ENCODE measurements at regions of chr5 and their contacts with region 1.

Region 1: GRCh38 chr5:157245477-157245876 is 20.4 kb upstream of the CYFIP2 start:
- DNase-seq: no peak
- ATAC-seq: no peak
- H3K4me3 ChIP-seq: no peak overlapping the region
- H3K4me3 Mint-ChIP-seq: peak overlapping the region in 3 of 10 donors; percentile 23 to 75 (median 27)
- H3K27ac ChIP-seq: peak overlapping the region; percentile 36
- H3K27ac Mint-ChIP-seq: peak overlapping the region; percentile 63 to 98 (median 86)
- H3K4me1 ChIP-seq: peaks cover 45 to 67% of the 10 kb centered on the region in 2 donors
- H3K4me1 Mint-ChIP-seq: peaks cover 41 to 87% (median 81%) of the 10 kb centered on the region in 7 donors
- H3K27me3 ChIP-seq: no peaks in the 10 kb centered on the region
- H3K27me3 Mint-ChIP-seq: no peaks in the 10 kb centered on the region

Region 2: DNA sequence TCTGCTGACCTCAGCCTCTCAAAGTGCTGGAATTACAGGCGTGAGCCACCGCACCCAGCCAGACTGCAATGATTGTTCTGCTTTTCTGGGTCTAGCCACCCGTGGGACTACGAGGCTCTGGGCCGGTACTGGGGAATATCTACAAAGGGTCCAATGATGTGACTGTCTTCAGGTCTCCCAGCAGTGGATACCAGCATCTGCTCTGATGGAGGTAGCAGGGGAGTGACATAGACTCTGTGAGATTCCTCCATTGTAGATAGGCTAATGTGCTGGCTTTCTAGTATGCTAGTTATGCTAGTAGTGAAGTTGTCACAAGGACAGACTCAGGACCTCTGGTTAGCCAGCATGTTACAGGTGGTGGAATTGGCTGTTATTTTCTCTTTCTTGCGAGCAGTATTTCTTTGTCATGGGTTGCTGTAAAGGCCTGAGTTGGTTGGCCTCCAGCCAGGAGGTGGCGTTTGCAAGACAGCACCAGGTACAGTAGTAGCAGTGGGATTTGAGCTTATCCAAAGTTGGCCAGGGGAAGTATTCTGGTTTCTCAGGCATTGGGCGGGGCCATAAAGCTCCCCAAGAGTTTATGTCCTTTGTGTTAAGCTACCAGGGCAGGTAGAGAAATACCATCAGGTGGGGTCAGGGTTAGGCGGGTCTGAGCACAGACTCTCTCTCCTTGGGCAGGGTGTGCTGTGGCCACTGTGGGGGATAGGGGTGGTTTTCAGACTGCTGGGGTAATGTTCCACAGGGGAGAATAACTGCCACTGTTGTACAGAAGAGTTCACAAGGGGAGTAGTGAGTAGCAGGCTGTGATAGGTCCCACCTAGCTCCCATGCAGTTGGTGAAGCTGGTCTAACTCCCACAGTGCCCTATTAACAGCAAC is 813.3 kb before region 1 on chr5:
- CTCF ChIA-PET with region 1: no interaction called
- POLR2A ChIA-PET with region 1: no interaction called
- intact Hi-C with region 1: no loop called
- DNase-seq: no peak
- ATAC-seq: no peak
- H3K4me3 ChIP-seq: no peak overlapping the region
- H3K4me3 Mint-ChIP-seq: no peak overlapping the region
- H3K27ac ChIP-seq: no peak overlapping the region
- H3K27ac Mint-ChIP-seq: no peak overlapping the region
- H3K4me1 ChIP-seq: no peaks in the 10 kb centered on the region
- H3K4me1 Mint-ChIP-seq: peaks cover 0 to 3% (median 0%) of the 10 kb centered on the region in 7 donors
- H3K27me3 ChIP-seq: no peaks in the 10 kb centered on the region
- H3K27me3 Mint-ChIP-seq: peaks cover 17 to 39% (median 32%) of the 10 kb centered on the region in 5 donors

Region 3: DNA sequence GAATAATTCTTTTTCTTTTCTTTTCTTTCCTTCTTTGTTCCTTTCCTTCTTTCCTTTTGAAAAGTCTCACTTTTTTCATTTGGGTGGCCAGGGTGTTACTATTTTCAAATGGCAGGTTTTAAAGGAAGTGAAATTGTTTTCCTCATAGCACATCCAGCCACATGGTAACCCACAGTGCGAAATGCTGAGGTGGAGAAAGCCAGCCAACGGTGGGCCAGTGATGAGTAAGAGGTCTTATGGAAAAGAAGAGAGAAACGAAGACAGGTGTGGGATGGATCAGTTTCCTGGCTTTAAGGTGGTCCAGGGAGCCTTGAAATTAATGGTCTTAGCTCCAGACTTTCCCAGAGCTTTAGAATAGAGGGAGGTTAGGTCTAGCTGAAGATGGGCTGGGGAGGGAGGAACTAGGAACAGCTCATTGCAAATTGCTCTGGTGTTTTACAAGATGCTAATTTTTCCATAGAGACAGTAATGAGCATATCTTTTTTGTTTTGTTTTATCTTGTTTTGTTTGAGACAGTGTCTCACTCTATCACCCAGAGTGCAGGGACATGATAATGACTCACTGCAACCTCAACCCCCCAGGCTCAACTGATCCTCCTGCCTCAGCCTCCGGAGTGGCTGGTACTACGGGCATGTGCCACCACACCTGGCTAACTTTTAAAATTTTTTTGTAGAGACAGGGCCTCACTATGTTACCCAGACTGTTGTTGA is 47.0 kb before region 1 on chr5:
- CTCF ChIA-PET with region 1: interaction called, 6 read pairs
- POLR2A ChIA-PET with region 1: interaction called, 7 read pairs
- intact Hi-C with region 1: loop called in 1 of 2 experiments (anchors 2 kb)
- DNase-seq: peak in 2 of 9 donors; percentile 58 to 77
- ATAC-seq: peak; percentile 49
- H3K4me3 ChIP-seq: peak overlapping the region; percentile 24
- H3K4me3 Mint-ChIP-seq: peak overlapping the region; percentile 47 to 98 (median 78)
- H3K27ac ChIP-seq: peak overlapping the region; percentile 81
- H3K27ac Mint-ChIP-seq: peak overlapping the region; percentile 78 to 98 (median 87)
- H3K4me1 ChIP-seq: peaks cover 86 to 95% of the 10 kb centered on the region in 2 donors
- H3K4me1 Mint-ChIP-seq: peaks cover 53 to 100% (median 97%) of the 10 kb centered on the region in 7 donors
- H3K27me3 ChIP-seq: no peaks in the 10 kb centered on the region
- H3K27me3 Mint-ChIP-seq: no peaks in the 10 kb centered on the region

Region 4: GRCh38 chr5:157225469-157226422 is 19.7 kb before region 1 on chr5:
- CTCF ChIA-PET with region 1: interaction called, 3 read pairs
- POLR2A ChIA-PET with region 1: interaction called, 3 read pairs
- intact Hi-C with region 1: loop called in 1 of 2 experiments (anchors 2 kb)
- DNase-seq: no peak
- ATAC-seq: no peak
- H3K4me3 ChIP-seq: no peak overlapping the region
- H3K4me3 Mint-ChIP-seq: peak overlapping the region in 6 of 10 donors; percentile 12 to 81 (median 50)
- H3K27ac ChIP-seq: peak overlapping the region; percentile 37
- H3K27ac Mint-ChIP-seq: peak overlapping the region; percentile 71 to 96 (median 82)
- H3K4me1 ChIP-seq: peaks cover 44 to 60% of the 10 kb centered on the region in 2 donors
- H3K4me1 Mint-ChIP-seq: peaks cover 34 to 75% (median 59%) of the 10 kb centered on the region in 7 donors
- H3K27me3 ChIP-seq: no peaks in the 10 kb centered on the region
- H3K27me3 Mint-ChIP-seq: no peaks in the 10 kb centered on the region

Region 5: GRCh38 chr5:157233515-157233914 is 12.0 kb before region 1 on chr5:
- CTCF ChIA-PET with region 1: interaction called, 3 read pairs
- POLR2A ChIA-PET with region 1: interaction called, 13 read pairs
- intact Hi-C with region 1: loop called (anchors 1 to 2 kb)
- DNase-seq: peak in 7 of 9 donors; percentile 54 to 81 (median 76)
- ATAC-seq: peak; percentile 95
- H3K4me3 ChIP-seq: no peak overlapping the region
- H3K4me3 Mint-ChIP-seq: peak overlapping the region in 5 of 10 donors; percentile 43 to 56 (median 52)
- H3K27ac ChIP-seq: peak overlapping the region; percentile 55
- H3K27ac Mint-ChIP-seq: peak overlapping the region; percentile 24 to 96 (median 85)
- H3K4me1 ChIP-seq: peaks cover 19 to 26% of the 10 kb centered on the region in 2 donors
- H3K4me1 Mint-ChIP-seq: peaks cover 23 to 82% (median 64%) of the 10 kb centered on the region in 7 donors
- H3K27me3 ChIP-seq: no peaks in the 10 kb centered on the region
- H3K27me3 Mint-ChIP-seq: no peaks in the 10 kb centered on the region

Region 6: DNA sequence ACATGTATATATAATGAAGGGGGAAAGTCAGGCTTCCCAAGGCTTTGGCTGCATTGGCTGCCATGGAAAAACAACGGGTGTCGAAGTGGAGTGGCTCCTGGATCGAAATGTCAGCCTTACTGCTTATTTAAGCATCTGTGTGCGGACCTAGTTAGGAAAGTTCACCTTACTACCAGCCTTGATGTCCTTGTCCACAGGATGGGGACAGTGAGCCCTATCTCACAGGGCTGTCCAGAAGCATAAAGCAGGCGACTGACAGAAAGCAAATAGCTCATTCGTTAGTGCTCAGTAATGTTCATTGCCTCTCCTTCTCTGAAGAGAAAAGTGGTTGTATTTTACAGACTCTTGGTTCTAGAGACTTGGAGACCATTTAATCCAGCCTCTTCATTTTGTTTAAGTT is 133.0 kb after region 1 on chr5:
- CTCF ChIA-PET with region 1: no interaction called
- POLR2A ChIA-PET with region 1: no interaction called
- intact Hi-C with region 1: no loop called
- DNase-seq: no peak
- ATAC-seq: no peak
- H3K4me3 ChIP-seq: no peak overlapping the region
- H3K4me3 Mint-ChIP-seq: no peak overlapping the region
- H3K27ac ChIP-seq: no peak overlapping the region
- H3K27ac Mint-ChIP-seq: peak overlapping the region; percentile 3 to 83 (median 67)
- H3K4me1 ChIP-seq: no peaks in the 10 kb centered on the region
- H3K4me1 Mint-ChIP-seq: peaks cover 6 to 20% (median 12%) of the 10 kb centered on the region in 7 donors
- H3K27me3 ChIP-seq: no peaks in the 10 kb centered on the region
- H3K27me3 Mint-ChIP-seq: no peaks in the 10 kb centered on the region

Region 7: GRCh38 chr5:157563373-157563928 is 318.0 kb after region 1 on chr5:
- CTCF ChIA-PET with region 1: no interaction called
- POLR2A ChIA-PET with region 1: no interaction called
- intact Hi-C with region 1: no loop called
- DNase-seq: no peak
- ATAC-seq: no peak
- H3K4me3 ChIP-seq: no peak overlapping the region
- H3K4me3 Mint-ChIP-seq: peak overlapping the region in 1 of 10 donors; percentile 57
- H3K27ac ChIP-seq: no peak overlapping the region
- H3K27ac Mint-ChIP-seq: peak overlapping the region in 1 of 9 donors; percentile 82
- H3K4me1 ChIP-seq: peaks cover 0 to 8% of the 10 kb centered on the region in 2 donors
- H3K4me1 Mint-ChIP-seq: peaks cover 0 to 82% (median 4%) of the 10 kb centered on the region in 7 donors
- H3K27me3 ChIP-seq: no peaks in the 10 kb centered on the region
- H3K27me3 Mint-ChIP-seq: no peaks in the 10 kb centered on the region

Region 8: GRCh38 chr5:158246661-158247060 is 1001.2 kb after region 1 on chr5:
- CTCF ChIA-PET with region 1: no interaction called
- POLR2A ChIA-PET with region 1: no interaction called
- intact Hi-C with region 1: no loop called
- DNase-seq: no peak
- ATAC-seq: no peak
- H3K4me3 ChIP-seq: no peak overlapping the region
- H3K4me3 Mint-ChIP-seq: no peak overlapping the region
- H3K27ac ChIP-seq: no peak overlapping the region
- H3K27ac Mint-ChIP-seq: no peak overlapping the region
- H3K4me1 ChIP-seq: no peaks in the 10 kb centered on the region
- H3K4me1 Mint-ChIP-seq: peaks cover 0 to 3% (median 0%) of the 10 kb centered on the region in 7 donors
- H3K27me3 ChIP-seq: no peaks in the 10 kb centered on the region
- H3K27me3 Mint-ChIP-seq: peaks cover 0 to 16% (median 3%) of the 10 kb centered on the region in 5 donors